Dorsolateral prefrontal cortex (tissue), 120 donors: ENCODE measurements at regions of chr14 and their contacts with region 1.

Region 1: DNA sequence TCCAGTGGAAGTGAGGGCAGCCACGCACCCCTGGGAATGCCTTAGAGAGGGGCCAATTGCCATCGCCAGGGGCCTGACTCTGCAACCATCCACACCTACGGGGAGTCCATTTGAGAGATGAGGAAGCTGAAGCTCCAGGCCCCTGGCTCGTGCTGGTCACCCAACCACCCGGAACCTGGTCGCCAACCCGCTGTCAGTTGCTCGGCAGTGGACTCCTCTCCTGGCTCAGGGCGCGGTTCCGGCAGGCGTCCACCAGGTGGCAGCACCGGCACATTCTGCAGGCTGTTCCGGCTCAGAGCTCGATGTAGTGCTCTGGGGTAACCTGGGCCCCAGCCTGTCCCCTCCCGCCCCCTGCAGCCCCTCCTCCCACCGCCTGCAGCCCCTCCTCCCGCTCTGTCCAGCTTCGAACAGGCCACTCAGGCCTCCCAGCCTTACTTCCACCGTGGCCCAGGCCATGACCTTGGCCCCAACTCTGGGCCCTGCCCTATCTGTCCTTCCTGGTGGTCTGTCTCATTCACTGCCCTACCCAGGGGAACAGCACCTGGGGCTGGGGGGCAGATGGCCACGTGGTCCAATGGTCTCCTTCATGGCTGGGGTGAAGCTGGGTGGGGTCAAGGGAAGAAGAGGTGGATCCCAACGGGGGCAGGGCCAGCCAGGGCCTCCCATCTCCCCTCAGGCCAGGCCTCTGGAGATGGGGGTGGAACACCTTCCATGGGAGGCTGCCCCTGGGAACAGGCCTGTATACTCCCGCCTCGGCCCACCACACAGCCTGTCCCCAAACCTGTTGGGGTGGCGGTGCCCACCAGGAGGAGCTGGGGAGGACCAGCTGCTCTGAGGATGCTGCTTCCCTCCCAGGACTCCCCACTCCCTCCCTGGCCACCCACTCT is 15.7 kb downstream of the SIVA1 start:
- DNase-seq: peak; percentile 85 to 95 (median 92)
- H3K4me3 ChIP-seq: no peak overlapping the region
- H3K27ac ChIP-seq: peak overlapping the region in 17 of 59 donors; percentile 1 to 87 (median 21)
- H3K27me3 ChIP-seq: no peaks in the 10 kb centered on the region
- CTCF ChIP-seq: peak; percentile 74 to 99 (median 97)

Region 2: DNA sequence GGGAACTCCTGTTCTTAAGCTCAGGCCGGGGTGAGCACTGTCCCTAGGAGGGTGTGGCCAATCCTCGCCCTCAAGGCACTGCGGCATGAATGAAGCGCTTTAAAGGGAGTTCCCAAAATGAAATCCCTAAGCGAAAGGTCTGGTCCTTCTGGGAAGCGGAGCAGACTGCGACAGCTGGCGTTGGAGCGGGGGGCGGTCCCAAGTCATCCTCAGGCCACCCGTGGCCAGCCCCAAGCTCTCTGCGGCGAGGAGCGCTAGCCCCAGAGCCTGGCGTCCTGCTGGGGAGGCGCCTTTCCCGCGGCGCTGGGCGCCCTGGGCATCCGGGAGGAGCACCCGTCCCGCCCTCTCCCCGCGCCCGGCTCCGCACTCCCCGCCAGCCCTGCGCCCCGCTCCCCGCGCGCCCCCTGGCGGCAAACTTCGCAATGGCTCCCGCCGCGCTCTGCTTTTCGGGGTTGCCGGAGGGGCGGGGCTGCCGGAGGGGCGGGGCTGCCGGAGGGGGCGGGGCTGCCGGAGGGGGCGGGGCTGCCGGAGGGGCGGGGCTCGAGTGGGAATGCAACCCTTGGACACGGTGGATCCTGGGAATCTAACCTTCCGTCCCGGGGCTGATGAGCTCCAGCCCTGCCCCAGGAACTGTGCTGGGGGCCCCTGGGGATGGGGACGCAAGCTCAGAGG is 57.6 kb after region 1 on chr14:
- intact Hi-C with region 1: loop called (anchors 1 to 2 kb)
- DNase-seq: peak; percentile 67 to 94 (median 82)
- H3K4me3 ChIP-seq: peak overlapping the region; percentile 37 to 89 (median 69)
- H3K27ac ChIP-seq: peak overlapping the region in 21 of 59 donors; percentile 9 to 84 (median 54)
- H3K27me3 ChIP-seq: no peaks in the 10 kb centered on the region
- CTCF ChIP-seq: peak; percentile 42 to 94 (median 78)

Region 3: GRCh38 chr14:104870420-104871144 is 101.9 kb after region 1 on chr14:
- intact Hi-C with region 1: loop called in 1 of 2 experiments (anchors 5 kb)
- DNase-seq: no peak
- H3K4me3 ChIP-seq: no peak overlapping the region
- H3K27ac ChIP-seq: no peak overlapping the region
- H3K27me3 ChIP-seq: no peaks in the 10 kb centered on the region
- CTCF ChIP-seq: peak in 34 of 56 donors; percentile 8 to 43 (median 23)

Region 4: DNA sequence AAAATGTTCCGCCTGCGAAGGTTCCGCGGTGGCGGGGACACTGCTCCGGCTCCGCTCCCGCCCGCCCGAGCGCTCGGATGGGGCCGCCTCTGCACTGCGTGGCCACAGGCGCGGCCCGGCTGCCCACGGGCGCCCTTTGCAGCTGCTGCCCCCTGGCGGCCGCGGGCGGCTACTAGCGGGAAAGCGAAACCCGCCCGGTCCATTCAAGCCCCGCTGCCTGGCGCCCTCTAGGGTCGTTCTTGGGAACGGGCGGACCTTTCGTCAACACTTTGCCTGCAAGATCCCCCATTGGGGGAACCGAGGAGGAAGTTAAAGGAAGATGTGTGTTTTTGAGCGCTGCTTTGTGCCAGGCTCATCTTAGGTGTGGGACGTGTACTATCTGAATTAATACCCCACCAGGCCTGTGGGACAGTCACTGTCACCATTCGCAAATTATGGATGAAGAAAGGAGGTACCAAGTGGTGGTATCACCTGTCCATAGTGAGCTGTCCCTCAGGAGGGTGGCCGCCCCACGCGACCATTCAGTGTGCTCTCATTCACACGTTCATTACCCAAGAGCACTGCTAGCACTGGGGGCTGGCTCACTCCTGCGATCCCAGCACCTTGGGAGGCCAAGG is 277.1 kb after region 1 on chr14:
- intact Hi-C with region 1: loop called in 1 of 2 experiments (anchors 10 kb)
- DNase-seq: peak in 9 of 10 donors; percentile 53 to 86 (median 69)
- H3K4me3 ChIP-seq: peak overlapping the region in 3 of 59 donors; percentile 9 to 34 (median 14)
- H3K27ac ChIP-seq: no peak overlapping the region
- H3K27me3 ChIP-seq: peaks cover 0 to 61% (median 26%) of the 10 kb centered on the region in 45 donors
- CTCF ChIP-seq: peak; percentile 80 to 100 (median 97)